Activated B cell treated with CpG ODN at 0.5 μM for 24 hours (primary cell): ENCODE measurements at regions of chr19 and their contacts with region 1.

Region 1: DNA sequence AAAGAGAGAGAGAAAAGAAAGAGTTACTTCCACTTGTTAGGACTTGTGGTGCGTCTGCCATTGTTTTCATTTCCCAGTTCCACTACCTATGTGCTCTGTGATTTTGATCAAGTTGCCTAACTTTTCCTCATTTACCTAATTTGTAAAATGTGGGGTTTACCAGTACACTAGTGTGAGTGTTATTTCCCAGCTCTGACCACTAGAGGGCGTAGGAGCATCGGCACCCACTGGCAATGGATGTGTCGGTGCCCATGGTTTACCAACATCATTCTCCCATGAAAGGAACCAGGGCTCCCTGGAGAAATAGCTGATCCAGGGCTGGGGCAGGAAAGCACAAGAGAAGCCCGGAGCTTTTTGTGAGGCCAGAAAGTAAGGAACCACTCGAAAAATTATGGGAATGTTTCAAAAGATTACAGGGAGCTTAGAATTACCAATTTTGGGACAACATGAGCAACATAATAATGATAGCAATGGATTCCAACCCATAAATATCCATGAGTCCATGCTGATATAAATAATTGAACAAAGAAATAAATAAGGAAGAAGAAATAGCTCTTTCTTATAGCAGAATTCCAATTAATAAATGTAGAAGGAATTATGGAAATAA is 15.1 kb upstream of the CEACAM4 start:
- DNase-seq: no peak
- ATAC-seq: no peak
- H3K4me3 Mint-ChIP-seq: no peak overlapping the region
- H3K27ac Mint-ChIP-seq: no peak overlapping the region
- H3K4me1 Mint-ChIP-seq: no peaks in the 10 kb centered on the region
- H3K27me3 Mint-ChIP-seq: peaks cover 40% of the 10 kb centered on the region
- CTCF ChIP-seq: peak; percentile 94

Region 2: GRCh38 chr19:41541990-41542584 is 99.9 kb before region 1 on chr19:
- CTCF ChIA-PET with region 1: no interaction called
- POLR2A ChIA-PET with region 1: no interaction called
- intact Hi-C with region 1: no loop called
- DNase-seq: peak; percentile 56
- ATAC-seq: no peak
- H3K4me3 Mint-ChIP-seq: peak overlapping the region; percentile 70
- H3K27ac Mint-ChIP-seq: peak overlapping the region; percentile 57
- H3K4me1 Mint-ChIP-seq: peaks cover 59% of the 10 kb centered on the region
- H3K27me3 Mint-ChIP-seq: no peaks in the 10 kb centered on the region
- CTCF ChIP-seq: no peak

Region 3: DNA sequence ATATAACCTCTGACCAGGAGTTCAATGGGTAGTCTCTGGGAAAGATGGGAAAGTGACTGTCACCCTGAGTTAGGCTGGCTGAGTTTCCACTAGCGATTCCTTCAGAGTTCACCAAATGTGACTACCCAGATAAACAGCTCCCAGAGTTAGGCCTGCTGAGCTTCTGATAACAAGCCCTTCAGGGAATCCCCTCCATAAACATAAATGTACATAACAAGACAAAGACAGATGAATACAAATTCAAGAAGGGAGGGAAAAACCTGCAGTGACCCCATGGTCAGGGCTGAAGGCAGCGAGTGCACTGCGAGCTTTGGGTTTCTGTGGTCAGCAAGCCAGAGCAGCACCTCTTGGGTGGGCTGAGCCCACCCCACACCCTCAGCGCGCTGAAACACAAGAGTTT is 10.3 kb after region 1 on chr19:
- CTCF ChIA-PET with region 1: interaction called, 18 read pairs
- POLR2A ChIA-PET with region 1: no interaction called
- intact Hi-C with region 1: no loop called
- DNase-seq: no peak
- ATAC-seq: no peak
- H3K4me3 Mint-ChIP-seq: no peak overlapping the region
- H3K27ac Mint-ChIP-seq: no peak overlapping the region
- H3K4me1 Mint-ChIP-seq: no peaks in the 10 kb centered on the region
- H3K27me3 Mint-ChIP-seq: peaks cover 60% of the 10 kb centered on the region
- CTCF ChIP-seq: no peak

Region 4: GRCh38 chr19:41668315-41668714 is 26.3 kb after region 1 on chr19:
- CTCF ChIA-PET with region 1: no interaction called
- POLR2A ChIA-PET with region 1: no interaction called
- intact Hi-C with region 1: no loop called
- DNase-seq: no peak
- ATAC-seq: no peak
- H3K4me3 Mint-ChIP-seq: no peak overlapping the region
- H3K27ac Mint-ChIP-seq: no peak overlapping the region
- H3K4me1 Mint-ChIP-seq: peaks cover 4% of the 10 kb centered on the region
- H3K27me3 Mint-ChIP-seq: peaks cover 30% of the 10 kb centered on the region
- CTCF ChIP-seq: no peak

Region 5: DNA sequence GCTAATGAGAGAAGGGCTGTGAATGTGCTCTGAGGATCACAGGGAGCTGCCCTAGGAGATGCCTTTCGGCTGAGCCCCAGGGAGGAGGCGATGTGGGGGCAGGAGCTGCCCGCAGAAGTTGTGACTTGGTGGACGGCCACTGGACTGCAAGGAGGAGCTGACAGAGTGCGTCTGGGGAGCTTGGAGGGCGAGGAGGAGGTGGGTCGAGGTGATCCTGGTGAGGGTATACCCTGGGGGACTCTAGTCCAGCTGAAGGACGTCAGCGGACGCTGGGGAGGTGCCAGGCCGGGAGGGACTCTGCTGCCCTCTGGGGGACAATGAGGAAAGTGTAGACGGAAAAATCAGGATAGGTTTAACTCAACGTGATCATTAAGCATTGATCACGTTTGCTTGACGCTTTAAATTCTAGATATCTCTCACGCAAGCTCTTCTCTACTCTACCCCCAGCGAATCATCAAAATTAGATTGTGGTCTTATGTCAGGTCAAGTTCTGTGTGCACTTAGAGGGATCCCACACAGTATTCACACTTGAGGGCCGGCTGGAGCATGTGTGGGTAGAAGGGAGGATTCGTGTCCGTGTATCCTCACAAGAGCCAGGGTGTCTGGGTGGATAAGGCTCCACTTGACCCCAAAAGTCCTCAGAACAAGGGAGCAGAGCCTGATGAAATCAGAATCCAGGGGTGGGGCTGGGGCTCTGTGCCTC is 49.4 kb after region 1 on chr19:
- CTCF ChIA-PET with region 1: interaction called, 4 read pairs
- POLR2A ChIA-PET with region 1: no interaction called
- intact Hi-C with region 1: loop called (anchors 5 kb)
- DNase-seq: no peak
- ATAC-seq: no peak
- H3K4me3 Mint-ChIP-seq: no peak overlapping the region
- H3K27ac Mint-ChIP-seq: no peak overlapping the region
- H3K4me1 Mint-ChIP-seq: no peaks in the 10 kb centered on the region
- H3K27me3 Mint-ChIP-seq: peaks cover 34% of the 10 kb centered on the region
- CTCF ChIP-seq: no peak

Region 6: GRCh38 chr19:41714598-41714997 is 72.6 kb after region 1 on chr19:
- CTCF ChIA-PET with region 1: no interaction called
- POLR2A ChIA-PET with region 1: no interaction called
- intact Hi-C with region 1: no loop called
- DNase-seq: no peak
- ATAC-seq: no peak
- H3K4me3 Mint-ChIP-seq: no peak overlapping the region
- H3K27ac Mint-ChIP-seq: no peak overlapping the region
- H3K4me1 Mint-ChIP-seq: no peaks in the 10 kb centered on the region
- H3K27me3 Mint-ChIP-seq: peaks cover 27% of the 10 kb centered on the region
- CTCF ChIP-seq: no peak

Region 7: DNA sequence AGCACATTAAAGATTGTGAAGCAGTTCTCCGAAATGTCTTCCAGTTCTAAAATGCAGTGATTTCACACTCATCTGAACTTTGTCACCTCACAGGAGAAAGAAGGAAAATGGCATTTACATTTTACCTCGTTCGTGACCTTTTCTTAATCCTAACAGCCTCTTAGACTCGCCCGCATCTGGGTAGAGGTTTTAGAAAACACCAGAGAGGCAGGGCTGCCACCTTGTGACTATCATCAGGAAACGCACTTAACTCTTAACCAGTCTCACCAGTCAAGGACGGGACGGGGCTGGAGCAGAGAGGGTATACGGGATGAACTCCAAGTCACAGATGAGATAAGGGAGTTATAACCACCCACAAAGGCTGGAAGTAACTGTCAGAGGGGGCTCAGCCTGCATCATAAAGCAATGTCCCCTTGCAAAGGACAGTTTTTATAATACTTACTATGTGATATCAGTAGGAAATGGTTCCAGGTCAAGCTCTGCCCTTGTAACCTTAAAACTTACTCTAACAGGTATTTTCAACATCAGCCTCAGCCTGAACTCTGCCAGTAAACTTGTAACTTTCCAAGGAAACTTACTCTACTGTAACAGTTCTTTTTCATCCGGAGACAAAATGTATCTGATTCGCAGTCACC is 104.7 kb after region 1 on chr19:
- CTCF ChIA-PET with region 1: interaction called, 6 read pairs
- POLR2A ChIA-PET with region 1: no interaction called
- intact Hi-C with region 1: loop called (anchors 5 kb)
- DNase-seq: no peak
- ATAC-seq: peak; percentile 47
- H3K4me3 Mint-ChIP-seq: no peak overlapping the region
- H3K27ac Mint-ChIP-seq: no peak overlapping the region
- H3K4me1 Mint-ChIP-seq: peaks cover 17% of the 10 kb centered on the region
- H3K27me3 Mint-ChIP-seq: peaks cover 35% of the 10 kb centered on the region
- CTCF ChIP-seq: no peak